Activated naive CD4-positive, alpha-beta T cell treated with anti-CD3 and anti-CD28 coated beads for 36 hours (primary cell): ENCODE measurements at regions of chr10 and their contacts with region 1.

Region 1: DNA sequence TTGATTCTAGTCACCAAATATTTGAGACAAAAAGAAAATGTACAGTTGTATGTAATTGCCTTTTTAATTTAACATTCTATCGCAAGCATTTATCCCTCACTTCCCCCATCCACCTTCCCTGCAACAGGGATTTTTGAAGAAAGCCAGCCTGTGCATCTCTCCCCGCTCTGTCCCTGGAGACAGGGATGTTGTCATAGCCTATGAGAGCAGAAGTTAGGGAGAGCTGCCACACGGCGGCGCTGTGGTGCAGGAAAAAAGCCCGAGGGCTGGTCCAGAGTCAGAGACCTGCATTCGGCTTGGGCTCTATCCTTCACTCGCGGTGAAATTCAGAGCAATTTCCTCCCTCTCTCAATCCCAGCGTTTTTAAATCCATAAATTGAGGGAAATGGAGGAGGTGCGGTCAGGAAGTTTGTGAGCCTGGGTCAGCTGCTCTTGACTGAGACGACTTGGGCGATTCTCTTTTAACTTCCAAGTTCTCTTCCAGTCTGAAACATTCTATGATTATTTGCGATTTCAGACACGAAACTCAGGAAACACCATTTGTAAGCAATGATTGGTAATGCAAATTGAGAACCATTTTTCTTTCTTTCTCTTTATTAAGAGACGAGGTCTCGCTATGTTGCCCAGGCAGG is 17.5 kb downstream of the HKDC1 start:
- DNase-seq: peak; percentile 95
- H3K4me3 Mint-ChIP-seq: no peak overlapping the region
- H3K27ac Mint-ChIP-seq: no peak overlapping the region
- H3K4me1 Mint-ChIP-seq: peaks cover 24% of the 10 kb centered on the region
- H3K27me3 Mint-ChIP-seq: no peaks in the 10 kb centered on the region

Region 2: DNA sequence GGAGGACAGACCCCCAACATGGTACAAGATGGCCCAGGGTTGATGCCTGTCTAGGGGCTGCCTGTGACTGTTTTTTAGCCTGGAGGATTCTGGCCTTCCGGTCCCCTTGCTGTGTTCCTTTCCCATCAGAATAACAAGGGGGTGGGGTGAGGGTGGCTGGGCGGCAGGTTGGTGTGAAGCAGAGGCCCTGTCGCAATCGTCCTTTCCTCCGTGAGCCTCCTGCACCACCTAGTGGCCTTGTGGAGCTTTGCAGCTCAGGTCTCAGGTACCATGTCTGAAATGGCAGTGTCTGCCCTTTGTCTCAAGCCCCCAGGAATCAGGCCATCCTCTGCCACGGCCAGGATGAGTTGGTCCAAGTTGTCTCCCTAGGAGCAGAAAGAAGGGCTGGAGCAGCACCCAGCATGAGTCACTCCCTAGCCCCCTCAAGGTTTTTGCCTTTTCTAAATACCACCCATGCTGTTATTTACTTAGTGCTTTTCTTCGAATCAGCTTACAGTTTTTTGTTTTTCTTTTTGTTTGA is 154.9 kb after region 1 on chr10:
- CTCF ChIA-PET with region 1: interaction called, 33 read pairs
- intact Hi-C with region 1: loop called (anchors 1 kb)
- DNase-seq: peak; percentile 92
- H3K4me3 Mint-ChIP-seq: no peak overlapping the region
- H3K27ac Mint-ChIP-seq: peak overlapping the region; percentile 76
- H3K4me1 Mint-ChIP-seq: peaks cover 23% of the 10 kb centered on the region
- H3K27me3 Mint-ChIP-seq: no peaks in the 10 kb centered on the region

Region 3: DNA sequence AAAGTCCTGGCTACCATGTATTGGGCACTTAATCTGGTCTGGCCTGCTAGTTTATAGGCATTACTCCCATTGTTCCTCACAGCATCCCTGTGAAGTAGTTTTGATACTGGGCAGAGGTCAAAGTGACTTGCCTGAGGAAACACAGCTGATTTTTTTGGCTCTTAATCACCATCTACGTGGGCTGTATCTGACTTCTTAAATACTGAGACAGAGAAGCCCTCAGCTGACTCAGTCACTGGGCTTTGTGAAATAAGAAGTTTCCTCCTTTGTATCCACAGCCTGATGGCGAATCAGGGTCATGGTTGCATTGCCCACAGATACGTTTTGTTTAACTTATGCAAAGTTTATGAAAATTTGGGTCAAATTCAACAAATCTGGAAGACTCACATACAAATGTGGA is 165.9 kb after region 1 on chr10:
- CTCF ChIA-PET with region 1: interaction called, 52 read pairs
- intact Hi-C with region 1: loop called (anchors 1 kb)
- DNase-seq: no peak
- H3K4me3 Mint-ChIP-seq: no peak overlapping the region
- H3K27ac Mint-ChIP-seq: no peak overlapping the region
- H3K4me1 Mint-ChIP-seq: peaks cover 7% of the 10 kb centered on the region
- H3K27me3 Mint-ChIP-seq: no peaks in the 10 kb centered on the region

Region 4: GRCh38 chr10:69506834-69507721 is 269.4 kb after region 1 on chr10:
- CTCF ChIA-PET with region 1: interaction called, 4 read pairs
- intact Hi-C with region 1: loop called (anchors 1 kb)
- DNase-seq: no peak
- H3K4me3 Mint-ChIP-seq: peak overlapping the region; percentile 66
- H3K27ac Mint-ChIP-seq: peak overlapping the region; percentile 34
- H3K4me1 Mint-ChIP-seq: peaks cover 10% of the 10 kb centered on the region
- H3K27me3 Mint-ChIP-seq: no peaks in the 10 kb centered on the region

Region 5: DNA sequence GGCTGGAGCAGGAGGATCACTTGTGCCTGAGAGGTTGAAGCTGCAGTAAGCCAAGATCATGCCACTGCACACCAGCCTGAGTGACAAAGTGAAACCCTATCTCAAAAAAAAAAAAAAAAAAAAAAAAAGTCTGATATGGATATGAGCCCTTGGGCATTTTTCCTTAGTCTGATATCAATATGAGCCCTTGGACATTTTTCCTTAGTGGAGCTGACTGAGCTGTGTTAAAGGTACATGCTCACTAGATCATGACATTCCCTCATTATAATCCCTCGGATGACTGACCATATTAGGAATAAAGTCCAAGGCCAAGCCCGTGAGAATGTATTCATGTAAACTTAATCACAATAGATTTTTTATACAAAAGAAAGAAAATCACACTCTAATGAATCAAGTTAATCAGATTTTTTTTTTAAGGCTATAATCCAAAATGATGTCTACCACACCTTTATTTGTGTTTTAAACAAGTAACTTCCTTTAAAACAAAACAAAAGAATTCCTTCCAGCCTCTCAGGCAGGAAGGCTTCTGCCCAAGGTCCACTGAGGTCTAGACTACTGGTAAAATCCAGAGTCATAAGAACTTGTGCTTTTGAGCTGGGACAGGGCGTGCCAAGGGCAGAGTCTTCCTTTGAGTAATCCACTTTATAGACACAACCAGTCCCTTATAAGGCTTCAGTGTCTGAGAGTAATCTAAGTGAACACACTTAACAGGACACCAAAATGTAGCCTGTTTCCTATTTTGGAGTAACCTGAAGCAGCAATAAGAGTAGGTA is 990.1 kb after region 1 on chr10:
- CTCF ChIA-PET with region 1: no interaction called
- intact Hi-C with region 1: no loop called
- DNase-seq: no peak
- H3K4me3 Mint-ChIP-seq: no peak overlapping the region
- H3K27ac Mint-ChIP-seq: no peak overlapping the region
- H3K4me1 Mint-ChIP-seq: peaks cover 58% of the 10 kb centered on the region
- H3K27me3 Mint-ChIP-seq: no peaks in the 10 kb centered on the region